Right ventricle myocardium inferior (tissue), 1 donor: ENCODE measurements at regions of chrX and their contacts with region 1.

Region 1: GRCh38 chrX:115362334-115363095 is 73.0 kb downstream of the LUZP4 start:
- DNase-seq: no peak
- ATAC-seq: no peak

Region 2: DNA sequence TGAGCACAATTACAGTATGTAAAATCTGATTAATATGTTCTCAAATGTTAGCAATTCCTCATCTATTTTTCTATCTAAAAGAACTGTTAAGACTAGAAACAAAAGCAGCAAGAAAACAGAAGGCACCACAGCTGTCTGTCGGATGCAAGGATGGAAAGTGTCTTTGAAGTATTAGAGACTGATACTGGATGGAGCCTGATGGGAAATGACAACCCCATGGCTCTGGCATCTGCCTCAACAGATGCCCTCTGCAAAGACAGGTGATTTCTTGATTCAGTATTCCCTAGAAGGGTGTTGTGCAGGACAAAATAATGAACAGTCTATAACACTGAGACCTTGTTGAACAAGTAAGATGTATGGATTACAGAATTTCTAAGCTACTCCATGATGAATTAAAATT is 148.4 kb before region 1 on chrX:
- intact Hi-C with region 1: no loop called
- DNase-seq: no peak
- ATAC-seq: no peak

Region 3: GRCh38 chrX:115553171-115553570 is 190.7 kb after region 1 on chrX:
- intact Hi-C with region 1: loop called (anchors 10 kb)
- DNase-seq: no peak
- ATAC-seq: no peak